H1 (cell line): ENCODE measurements at regions of chr17 and their contacts with region 1.

Region 1: DNA sequence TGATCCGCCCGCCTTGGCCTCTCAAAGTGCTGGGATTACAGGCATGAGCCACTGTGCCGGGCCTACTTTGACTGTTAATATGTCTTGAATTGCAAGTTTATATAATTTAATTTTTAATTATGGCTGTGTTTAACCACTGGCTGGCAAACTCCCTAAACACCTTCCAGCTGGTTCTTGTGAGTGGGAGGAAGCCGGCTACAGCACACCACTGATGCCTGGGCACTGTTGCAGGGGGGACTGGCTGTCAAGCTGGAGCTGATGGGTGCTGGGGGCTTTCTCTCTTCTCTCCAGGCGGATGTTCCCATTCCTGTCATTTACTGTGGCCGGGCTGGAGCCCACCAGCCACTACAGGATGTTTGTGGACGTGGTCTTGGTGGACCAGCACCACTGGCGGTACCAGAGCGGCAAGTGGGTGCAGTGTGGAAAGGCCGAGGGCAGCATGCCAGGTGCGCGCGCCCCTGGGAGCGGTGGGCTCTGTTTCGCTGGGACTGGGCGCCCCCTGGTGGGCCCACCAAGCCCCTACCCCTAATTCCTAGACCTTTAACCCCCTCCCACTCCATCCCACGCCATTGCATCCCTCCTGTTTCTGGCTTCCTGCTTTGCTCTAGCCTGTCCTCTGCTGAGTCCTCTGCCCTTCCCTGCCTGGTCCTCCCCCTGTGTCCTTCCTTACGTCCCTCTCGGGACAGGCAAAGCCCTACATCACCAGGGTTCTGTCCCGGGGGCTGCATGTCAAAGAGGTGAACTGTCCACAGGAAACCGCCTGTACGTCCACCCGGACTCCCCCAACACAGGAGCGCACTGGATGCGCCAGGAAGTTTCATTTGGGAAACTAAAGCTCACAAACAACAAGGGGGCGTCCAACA is 9.5 kb downstream of the TBX21 start:
- DNase-seq: peak in 1 of 2 experiments; percentile 89
- H3K4me3 ChIP-seq: no peak overlapping the region
- H3K27ac ChIP-seq: no peak overlapping the region
- H3K4me1 ChIP-seq: peaks cover 0 to 5% (median 2%) of the 10 kb centered on the region in 4 experiments; a peak in 2 of 7 replicates
- H3K27me3 ChIP-seq: 0 out of 7 replicates have a peak, but pooled peaks cover 0 to 2% (median 0%) of the 10 kb centered on the region in 4 experiments
- CTCF ChIP-seq: peak; percentile 82 to 85 (median 84)
- EP300 ChIP-seq: no peak
- POLR2A ChIP-seq: no peak
- RAD21 ChIP-seq: peak; percentile 87 to 92

Region 2: DNA sequence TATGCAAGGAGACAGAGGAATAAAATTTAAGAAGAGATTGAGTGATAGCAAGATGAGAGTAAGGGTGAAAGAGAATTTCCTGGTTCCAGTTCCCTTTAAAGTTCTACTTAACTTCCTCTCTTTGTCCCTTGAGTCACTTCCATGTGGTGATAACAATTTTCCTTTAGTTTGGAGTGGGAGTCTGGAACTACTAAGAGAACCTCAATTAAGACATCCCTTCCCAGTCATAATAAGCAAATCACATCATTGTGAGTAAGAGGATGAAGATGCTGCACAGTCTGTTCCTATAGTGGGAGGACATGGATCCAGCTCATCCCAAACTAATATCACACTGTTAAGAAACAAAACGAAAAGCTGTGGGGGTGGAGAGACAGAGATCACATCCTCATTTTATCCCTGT is 14.8 kb after region 1 on chr17:
- CTCF ChIA-PET with region 1: interaction called, 26 read pairs
- POLR2A ChIA-PET with region 1: no interaction called
- DNase-seq: no peak
- H3K4me3 ChIP-seq: no peak overlapping the region
- H3K27ac ChIP-seq: no peak overlapping the region
- H3K4me1 ChIP-seq: no peaks in the 10 kb centered on the region
- H3K27me3 ChIP-seq: no peaks in the 10 kb centered on the region
- CTCF ChIP-seq: no peak
- EP300 ChIP-seq: no peak
- POLR2A ChIP-seq: no peak
- RAD21 ChIP-seq: no peak